Mammary epithelial cell (primary cell): ENCODE measurements at regions of chr1 and their contacts with region 1.

Region 1: GRCh38 chr1:75273110-75273509 is 138.9 kb downstream of the LHX8 start:
- DNase-seq: no peak
- H3K4me3 ChIP-seq: no peak overlapping the region
- H3K27ac ChIP-seq: no peak overlapping the region
- H3K4me1 ChIP-seq: no peaks in the 10 kb centered on the region
- H3K27me3 ChIP-seq: no peaks in the 10 kb centered on the region
- CTCF ChIP-seq: no peak

Region 2: GRCh38 chr1:75373533-75374320 is 100.6 kb after region 1 on chr1:
- CTCF ChIA-PET with region 1: no interaction called
- dilution Hi-C with region 1: no loop called
- in situ Hi-C with region 1: no loop called
- intact Hi-C with region 1: no loop called
- DNase-seq: no peak
- H3K4me3 ChIP-seq: no peak overlapping the region
- H3K27ac ChIP-seq: no peak overlapping the region
- H3K4me1 ChIP-seq: peaks cover 4% of the 10 kb centered on the region
- H3K27me3 ChIP-seq: no peaks in the 10 kb centered on the region
- CTCF ChIP-seq: no peak

Region 3: DNA sequence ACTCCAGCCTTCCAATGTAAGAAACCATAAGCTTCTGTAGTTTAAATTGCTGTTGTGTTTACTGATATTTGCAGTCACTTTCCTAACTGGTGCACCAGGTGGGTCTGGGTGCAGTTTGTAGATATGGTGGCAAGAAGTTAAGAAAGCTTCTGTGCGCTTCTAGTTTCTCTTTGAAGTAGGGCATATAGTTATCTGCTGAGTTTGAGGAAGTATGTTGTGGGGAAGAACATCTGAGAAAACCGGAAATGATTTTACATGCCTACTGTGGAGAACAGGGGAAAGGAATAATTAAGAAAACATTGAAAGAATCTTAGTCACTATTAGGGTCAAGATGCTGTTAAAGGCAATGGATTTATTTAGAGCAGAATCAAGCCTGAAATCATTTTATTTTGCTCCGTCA is 352.7 kb after region 1 on chr1:
- CTCF ChIA-PET with region 1: no interaction called
- dilution Hi-C with region 1: no loop called
- in situ Hi-C with region 1: loop called (anchors 10 to 25 kb)
- intact Hi-C with region 1: no loop called
- DNase-seq: no peak
- H3K4me3 ChIP-seq: no peak overlapping the region
- H3K27ac ChIP-seq: no peak overlapping the region
- H3K4me1 ChIP-seq: no peaks in the 10 kb centered on the region
- H3K27me3 ChIP-seq: peaks cover 4% of the 10 kb centered on the region
- CTCF ChIP-seq: no peak